ENCODE measurements at regions of chr20 and their contacts with region 1.

Region 1: GRCh38 chr20:24917797-24918578 is 31.1 kb upstream of the CST7 start:
- DNase-seq: peak; percentile 65
- H3K4me3 Mint-ChIP-seq: no peak overlapping the region
- H3K27ac Mint-ChIP-seq: no peak overlapping the region
- H3K4me1 Mint-ChIP-seq: peaks cover 7% of the 10 kb centered on the region
- H3K27me3 Mint-ChIP-seq: peaks cover 4% of the 10 kb centered on the region

Region 2: GRCh38 chr20:24160563-24161375 is 757.2 kb before region 1 on chr20:
- CTCF ChIA-PET with region 1: interaction called, 7 read pairs
- POLR2A ChIA-PET with region 1: no interaction called
- intact Hi-C with region 1: loop called (anchors 5 kb)
- DNase-seq: peak; percentile 21
- H3K4me3 Mint-ChIP-seq: no peak overlapping the region
- H3K27ac Mint-ChIP-seq: no peak overlapping the region
- H3K4me1 Mint-ChIP-seq: no peaks in the 10 kb centered on the region
- H3K27me3 Mint-ChIP-seq: no peaks in the 10 kb centered on the region

Region 3: DNA sequence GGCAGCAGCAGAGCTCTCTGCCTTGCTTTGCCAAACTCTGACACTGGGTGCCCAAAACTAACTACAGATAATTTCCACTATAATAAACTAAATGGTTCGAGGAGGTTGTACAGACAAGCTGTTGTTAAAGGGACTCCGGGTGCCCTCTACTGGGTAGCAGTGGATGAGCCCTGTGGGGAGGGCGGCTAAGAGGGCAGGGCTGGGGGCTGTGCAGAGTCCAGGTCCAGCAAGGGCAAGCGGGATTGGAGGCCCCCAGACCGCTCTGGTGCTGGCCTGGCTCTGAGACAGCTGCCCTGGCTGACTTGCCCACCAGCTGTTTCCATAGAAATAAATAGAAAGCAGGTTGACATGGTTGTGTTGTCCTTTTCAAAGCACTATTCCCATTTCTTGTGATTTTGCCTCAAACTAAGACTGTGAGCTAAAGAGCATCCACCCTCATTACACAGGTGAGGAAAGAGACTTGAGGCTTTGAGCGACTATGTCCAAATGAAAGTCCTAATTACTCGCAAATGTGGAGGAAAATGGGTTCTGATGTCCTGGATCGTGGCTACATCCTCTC is 136.5 kb before region 1 on chr20:
- CTCF ChIA-PET with region 1: interaction called, 4 read pairs
- POLR2A ChIA-PET with region 1: no interaction called
- intact Hi-C with region 1: loop called (anchors 5 kb)
- DNase-seq: peak; percentile 32
- H3K4me3 Mint-ChIP-seq: no peak overlapping the region
- H3K27ac Mint-ChIP-seq: no peak overlapping the region
- H3K4me1 Mint-ChIP-seq: no peaks in the 10 kb centered on the region
- H3K27me3 Mint-ChIP-seq: peaks cover 13% of the 10 kb centered on the region

Measured in activated CD4-positive, alpha-beta memory T cell treated with anti-CD3 and anti-CD28 coated beads for 36 hours (primary cell).